Activated CD4-positive, alpha-beta T cell treated with anti-CD3 and anti-CD28 coated beads for 36 hours (primary cell): ENCODE measurements at regions of chr16 and their contacts with region 1.

Region 1: DNA sequence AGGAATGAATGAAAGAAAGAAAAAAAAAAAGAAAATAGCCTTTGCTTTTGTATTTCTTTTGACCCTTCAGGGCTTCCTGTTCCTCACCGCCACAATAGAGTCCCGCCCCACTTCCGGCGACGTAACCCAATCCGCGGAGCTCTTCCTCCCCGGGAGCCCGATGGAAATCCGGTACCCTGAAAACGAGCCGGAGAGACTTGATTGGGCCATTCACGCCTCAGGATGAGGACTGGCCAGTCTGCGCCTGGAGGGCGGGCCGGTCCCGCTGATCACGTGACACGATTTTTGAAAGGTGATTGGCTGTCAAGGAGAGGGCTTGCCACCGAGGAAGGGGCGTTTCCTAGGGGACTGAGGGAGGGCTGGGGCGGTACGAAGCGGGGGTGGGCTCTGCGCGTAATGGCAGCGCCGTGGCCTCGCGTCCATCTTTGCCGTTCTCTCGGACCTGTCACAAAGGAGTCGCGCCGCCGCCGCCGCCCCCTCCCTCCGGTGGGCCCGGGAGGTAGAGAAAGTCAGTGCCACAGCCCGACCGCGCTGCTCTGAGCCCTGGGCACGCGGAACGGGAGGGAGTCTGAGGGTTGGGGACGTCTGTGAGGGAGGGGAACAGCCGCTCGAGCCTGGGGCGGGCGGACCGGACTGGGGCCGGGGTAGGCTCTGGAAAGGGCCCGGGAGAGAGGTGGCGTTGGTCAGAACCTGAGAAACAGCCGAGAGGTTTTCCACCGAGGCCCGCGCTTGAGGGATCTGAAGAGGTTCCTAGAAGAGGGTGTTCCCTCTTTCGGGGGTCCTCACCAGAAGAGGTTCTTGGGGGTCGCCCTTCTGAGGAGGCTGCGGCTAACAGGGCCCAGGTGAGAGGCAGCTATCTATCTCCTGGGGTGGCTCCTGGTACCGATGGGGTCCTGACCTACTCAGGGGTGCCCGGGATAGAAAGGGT is at the starts of genes PSME3IP1 and RSPRY1:
- DNase-seq: peak; percentile 99
- ATAC-seq: peak; percentile 96
- H3K4me3 Mint-ChIP-seq: peak within 1 kb of the TSS; percentile 100
- H3K27ac Mint-ChIP-seq: peak within 1 kb of the TSS; percentile 97
- H3K4me1 Mint-ChIP-seq: peaks cover 37% of the 10 kb centered on the region
- H3K27me3 Mint-ChIP-seq: no peaks in the 10 kb centered on the region
- total RNA-seq, gene PSME3IP1: 111 to 156 TPM
- total RNA-seq, gene RSPRY1: 24.6 to 30.2 TPM

Region 2: DNA sequence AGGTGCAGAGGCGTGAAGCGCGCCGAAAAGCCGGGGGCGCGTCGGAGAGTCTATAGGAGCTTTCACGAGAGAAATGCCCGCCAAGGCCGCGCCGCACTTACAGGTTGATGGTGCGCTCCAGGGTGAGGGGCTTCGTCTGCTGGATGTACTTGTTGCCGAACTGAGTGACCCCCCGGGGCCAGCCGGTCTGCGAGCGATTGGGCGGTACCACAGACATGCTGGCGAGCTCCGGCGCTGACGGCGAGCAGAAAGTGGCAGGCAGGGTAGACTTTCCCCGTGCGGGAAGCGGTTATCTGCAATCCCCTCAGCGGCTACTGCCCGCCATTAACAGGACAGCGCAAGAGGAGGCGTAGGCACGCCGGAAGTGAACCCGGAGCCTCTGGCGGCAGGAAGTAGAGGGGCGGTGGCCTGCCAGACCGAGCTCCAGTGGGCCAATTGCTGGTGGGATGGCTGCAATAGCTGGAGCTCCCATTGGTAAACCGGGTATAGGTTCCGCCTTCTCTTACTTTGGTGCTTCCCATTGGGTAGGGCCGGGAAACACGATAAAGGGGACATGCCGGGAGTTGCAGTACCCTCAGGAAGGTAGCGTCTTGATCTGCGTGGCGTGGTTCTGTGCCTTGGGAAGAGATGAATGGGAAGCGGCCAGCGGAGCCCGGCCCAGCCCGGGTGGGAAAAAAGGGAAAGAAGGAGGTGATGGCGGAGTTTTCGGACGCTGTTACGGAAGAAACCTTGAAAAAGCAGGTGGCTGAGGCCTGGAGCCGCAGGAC is 735.0 kb before region 1 on chr16 and contains the starts of genes NUDT21 and OGFOD1:
- CTCF ChIA-PET with region 1: interaction called, 3 read pairs
- POLR2A ChIA-PET with region 1: no interaction called
- intact Hi-C with region 1: loop called in 1 of 2 experiments (anchors 1 kb)
- DNase-seq: peak; percentile 95
- ATAC-seq: peak; percentile 97
- H3K4me3 Mint-ChIP-seq: peak within 1 kb of the TSS; percentile 84
- H3K27ac Mint-ChIP-seq: peak within 1 kb of the TSS; percentile 93
- H3K4me1 Mint-ChIP-seq: peaks cover 51% of the 10 kb centered on the region
- H3K27me3 Mint-ChIP-seq: no peaks in the 10 kb centered on the region
- total RNA-seq, gene NUDT21: 333 to 349 TPM
- total RNA-seq, gene OGFOD1: 56.2 to 64.1 TPM

Region 3: GRCh38 chr16:56988948-56989945 is 197.0 kb before region 1 on chr16 and contains the start of gene NLRC5:
- CTCF ChIA-PET with region 1: no interaction called
- POLR2A ChIA-PET with region 1: no interaction called
- intact Hi-C with region 1: loop called in 1 of 2 experiments (anchors 1 kb)
- DNase-seq: peak; percentile 97
- ATAC-seq: peak; percentile 78
- H3K4me3 Mint-ChIP-seq: peak within 1 kb of the TSS; percentile 98
- H3K27ac Mint-ChIP-seq: peak within 1 kb of the TSS; percentile 99
- H3K4me1 Mint-ChIP-seq: peaks cover 69% of the 10 kb centered on the region
- H3K27me3 Mint-ChIP-seq: no peaks in the 10 kb centered on the region
- total RNA-seq, gene NLRC5: 143 to 175 TPM

Region 4: GRCh38 chr16:57146735-57147134 is 39.5 kb before region 1 on chr16:
- CTCF ChIA-PET with region 1: no interaction called
- POLR2A ChIA-PET with region 1: no interaction called
- intact Hi-C with region 1: no loop called
- DNase-seq: no peak
- ATAC-seq: no peak
- H3K4me3 Mint-ChIP-seq: no peak overlapping the region
- H3K27ac Mint-ChIP-seq: no peak overlapping the region
- H3K4me1 Mint-ChIP-seq: peaks cover 27% of the 10 kb centered on the region
- H3K27me3 Mint-ChIP-seq: no peaks in the 10 kb centered on the region

Region 5: DNA sequence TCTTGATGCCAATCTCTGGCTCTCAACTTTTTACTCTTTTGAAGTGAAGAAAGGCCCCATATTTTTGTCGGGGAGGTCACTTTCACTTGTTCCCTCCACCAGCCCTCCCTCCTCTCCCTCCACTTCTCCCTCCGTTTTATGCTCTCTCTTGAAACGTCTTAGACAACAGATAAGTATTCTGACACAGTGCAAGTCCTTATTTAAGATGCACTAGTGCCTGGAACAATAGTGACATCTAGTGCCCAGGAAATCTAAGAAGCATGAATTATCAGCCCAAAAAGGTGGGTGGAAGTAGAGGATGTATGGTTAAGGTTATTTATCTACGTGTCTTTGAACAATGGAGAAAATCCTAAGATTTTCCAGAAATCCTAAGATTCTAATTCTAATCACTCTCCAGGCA is 18.3 kb before region 1 on chr16:
- CTCF ChIA-PET with region 1: no interaction called
- POLR2A ChIA-PET with region 1: no interaction called
- intact Hi-C with region 1: no loop called
- DNase-seq: no peak
- ATAC-seq: peak; percentile 88
- H3K4me3 Mint-ChIP-seq: no peak overlapping the region
- H3K27ac Mint-ChIP-seq: no peak overlapping the region
- H3K4me1 Mint-ChIP-seq: no peaks in the 10 kb centered on the region
- H3K27me3 Mint-ChIP-seq: no peaks in the 10 kb centered on the region

Region 6: GRCh38 chr16:57244767-57245471 is 58.7 kb after region 1 on chr16 and contains the start of gene ARL2BP:
- CTCF ChIA-PET with region 1: no interaction called
- POLR2A ChIA-PET with region 1: interaction called, 8 read pairs
- intact Hi-C with region 1: loop called (anchors 1 to 2 kb)
- DNase-seq: peak; percentile 99
- ATAC-seq: peak; percentile 97
- H3K4me3 Mint-ChIP-seq: peak within 1 kb of the TSS; percentile 86
- H3K27ac Mint-ChIP-seq: peak within 1 kb of the TSS; percentile 92
- H3K4me1 Mint-ChIP-seq: peaks cover 19% of the 10 kb centered on the region
- H3K27me3 Mint-ChIP-seq: no peaks in the 10 kb centered on the region
- total RNA-seq, gene ARL2BP: 9.9 to 11.1 TPM

Region 7: DNA sequence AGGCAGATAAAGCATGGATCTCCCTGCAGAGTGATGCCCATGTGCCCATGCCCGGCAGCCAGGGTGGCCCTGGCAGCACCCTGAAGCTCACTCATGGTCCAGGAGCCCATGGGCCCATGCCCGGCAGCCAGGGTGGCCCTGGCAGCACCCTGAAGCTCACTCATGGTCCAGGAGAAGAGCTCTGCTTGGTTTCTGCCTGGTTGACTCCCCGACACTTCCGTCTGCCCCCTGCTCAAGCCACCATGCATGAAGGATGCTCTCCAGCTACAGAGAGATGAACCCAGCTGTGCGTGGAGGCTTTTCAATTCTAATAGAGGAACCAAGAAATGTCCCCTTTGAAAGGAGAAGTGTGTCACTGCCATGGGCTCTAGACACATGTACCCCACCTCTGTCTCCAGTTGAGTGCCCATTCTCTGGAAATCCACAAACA is 227.1 kb after region 1 on chr16:
- CTCF ChIA-PET with region 1: interaction called, 4 read pairs
- POLR2A ChIA-PET with region 1: no interaction called
- intact Hi-C with region 1: loop called in 1 of 2 experiments (anchors 5 kb)
- DNase-seq: no peak
- ATAC-seq: no peak
- H3K4me3 Mint-ChIP-seq: no peak overlapping the region
- H3K27ac Mint-ChIP-seq: no peak overlapping the region
- H3K4me1 Mint-ChIP-seq: peaks cover 10% of the 10 kb centered on the region
- H3K27me3 Mint-ChIP-seq: no peaks in the 10 kb centered on the region

Region 8: DNA sequence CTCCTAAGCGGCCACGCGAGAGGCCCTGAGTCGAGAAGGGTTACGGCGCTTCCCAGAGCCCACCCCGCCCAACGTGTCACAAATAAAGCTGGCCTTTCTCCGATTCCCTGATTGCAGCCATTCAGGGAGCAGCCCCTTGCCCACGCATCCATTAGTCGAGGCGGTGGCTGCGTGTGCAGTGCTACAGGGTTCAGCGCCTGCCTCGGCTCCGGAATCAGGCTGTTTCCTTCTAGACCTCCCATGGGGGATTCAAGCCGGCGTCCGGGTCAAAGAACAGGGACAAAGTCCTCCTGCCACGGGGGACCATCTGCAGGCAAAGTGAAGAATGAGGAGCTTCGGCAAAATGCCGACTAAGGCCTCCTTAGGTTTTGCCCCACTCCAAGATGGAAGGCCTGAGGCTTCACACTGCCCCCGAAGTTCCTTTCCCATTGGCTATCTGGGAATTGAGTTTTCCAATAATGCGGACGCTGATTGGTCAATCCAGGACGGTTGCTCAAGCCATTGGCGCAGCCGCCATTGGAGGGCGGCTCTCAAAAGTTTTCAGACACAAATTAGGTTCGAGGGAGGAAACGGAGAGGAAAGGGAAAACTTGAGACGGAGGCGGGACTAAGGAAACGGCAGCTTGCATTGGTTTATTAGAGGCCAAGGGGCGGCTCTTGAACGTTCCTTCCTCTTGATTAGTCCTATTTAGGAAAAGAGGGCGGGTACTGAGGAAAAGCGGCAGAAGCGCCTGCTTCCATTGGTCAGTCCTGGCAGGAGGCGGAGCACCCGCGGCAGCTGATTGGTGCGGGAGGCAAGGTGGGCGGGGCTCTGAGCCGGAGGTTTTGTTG is 548.9 kb after region 1 on chr16:
- CTCF ChIA-PET with region 1: no interaction called
- POLR2A ChIA-PET with region 1: no interaction called
- intact Hi-C with region 1: loop called (anchors 2 kb)
- DNase-seq: peak; percentile 98
- ATAC-seq: peak; percentile 95
- H3K4me3 Mint-ChIP-seq: peak overlapping the region; percentile 92
- H3K27ac Mint-ChIP-seq: peak overlapping the region; percentile 96
- H3K4me1 Mint-ChIP-seq: peaks cover 22% of the 10 kb centered on the region
- H3K27me3 Mint-ChIP-seq: no peaks in the 10 kb centered on the region